Calu3 (cell line): ENCODE measurements at regions of chr5 and their contacts with region 1.

Region 1: GRCh38 chr5:141878711-141879425 is 658 bp upstream of the PCDH1 start:
- DNase-seq: peak; percentile 93
- H3K4me3 Mint-ChIP-seq: peak overlapping the region; percentile 87
- H3K27ac Mint-ChIP-seq: peak overlapping the region; percentile 49
- H3K4me1 Mint-ChIP-seq: peaks cover 32% of the 10 kb centered on the region
- H3K27me3 Mint-ChIP-seq: peaks cover 44% of the 10 kb centered on the region
- CTCF ChIP-seq: peak; percentile 95

Region 2: DNA sequence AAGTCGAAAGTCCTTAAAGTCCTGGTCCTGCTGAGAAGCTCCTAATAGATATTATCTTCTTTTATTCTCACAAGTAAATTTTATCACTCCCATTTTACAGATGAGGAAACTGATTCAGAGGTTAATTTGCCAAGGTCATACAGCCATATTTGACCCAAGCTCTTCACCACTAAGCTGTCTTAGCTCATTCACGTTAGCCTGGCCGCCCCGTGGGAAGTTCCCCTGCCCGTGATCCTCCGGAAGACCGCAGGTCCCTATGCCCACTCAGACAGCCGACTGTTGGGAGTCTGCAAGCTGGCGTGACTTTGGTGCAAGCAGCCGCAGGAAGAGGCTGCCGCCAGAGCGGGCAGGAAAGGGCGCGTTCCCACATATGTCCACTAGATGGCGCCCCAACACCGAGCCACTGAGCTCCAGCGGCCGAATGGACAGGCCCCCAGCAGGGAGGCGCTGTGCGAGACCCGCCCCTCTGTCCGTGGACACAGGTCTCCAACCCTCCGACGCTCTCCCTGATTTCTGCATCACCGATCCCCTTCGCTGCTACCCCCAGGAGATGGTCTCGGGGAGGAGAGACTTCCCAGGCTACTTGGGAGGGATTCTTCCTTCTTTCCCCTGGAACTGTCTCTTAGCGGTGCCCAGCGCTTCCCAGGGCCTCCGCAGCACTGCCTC is 186.9 kb before region 1 on chr5:
- CTCF ChIA-PET with region 1: interaction called, 35 read pairs
- intact Hi-C with region 1: loop called (anchors 2 kb)
- DNase-seq: peak; percentile 95
- H3K4me3 Mint-ChIP-seq: peak overlapping the region; percentile 69
- H3K27ac Mint-ChIP-seq: no peak overlapping the region
- H3K4me1 Mint-ChIP-seq: peaks cover 35% of the 10 kb centered on the region
- H3K27me3 Mint-ChIP-seq: peaks cover 47% of the 10 kb centered on the region
- CTCF ChIP-seq: peak; percentile 97

Region 3: DNA sequence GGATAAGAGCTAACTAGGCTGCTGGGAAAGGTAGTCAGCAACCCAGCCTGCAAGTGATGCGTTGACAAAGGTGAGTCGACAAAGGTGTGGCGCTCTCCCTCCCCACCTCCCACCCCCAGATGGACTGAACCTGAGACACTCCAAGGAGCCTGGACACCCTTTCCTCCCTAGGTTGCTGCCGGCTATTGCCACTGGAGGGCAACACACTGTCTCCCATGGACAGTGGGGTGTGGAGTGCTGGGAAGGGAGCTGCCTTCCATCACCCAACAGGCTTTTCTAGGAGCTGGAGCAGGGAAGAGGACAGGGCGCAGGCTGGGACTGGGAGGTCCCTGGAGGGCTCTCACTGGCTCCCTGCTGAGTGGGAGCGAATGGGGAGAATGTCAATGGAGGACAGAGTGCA is 121.5 kb before region 1 on chr5:
- CTCF ChIA-PET with region 1: interaction called, 76 read pairs
- intact Hi-C with region 1: loop called (anchors 1 kb)
- DNase-seq: peak; percentile 75
- H3K4me3 Mint-ChIP-seq: no peak overlapping the region
- H3K27ac Mint-ChIP-seq: peak overlapping the region; percentile 9
- H3K4me1 Mint-ChIP-seq: peaks cover 20% of the 10 kb centered on the region
- H3K27me3 Mint-ChIP-seq: peaks cover 61% of the 10 kb centered on the region
- CTCF ChIP-seq: peak; percentile 50

Region 4: DNA sequence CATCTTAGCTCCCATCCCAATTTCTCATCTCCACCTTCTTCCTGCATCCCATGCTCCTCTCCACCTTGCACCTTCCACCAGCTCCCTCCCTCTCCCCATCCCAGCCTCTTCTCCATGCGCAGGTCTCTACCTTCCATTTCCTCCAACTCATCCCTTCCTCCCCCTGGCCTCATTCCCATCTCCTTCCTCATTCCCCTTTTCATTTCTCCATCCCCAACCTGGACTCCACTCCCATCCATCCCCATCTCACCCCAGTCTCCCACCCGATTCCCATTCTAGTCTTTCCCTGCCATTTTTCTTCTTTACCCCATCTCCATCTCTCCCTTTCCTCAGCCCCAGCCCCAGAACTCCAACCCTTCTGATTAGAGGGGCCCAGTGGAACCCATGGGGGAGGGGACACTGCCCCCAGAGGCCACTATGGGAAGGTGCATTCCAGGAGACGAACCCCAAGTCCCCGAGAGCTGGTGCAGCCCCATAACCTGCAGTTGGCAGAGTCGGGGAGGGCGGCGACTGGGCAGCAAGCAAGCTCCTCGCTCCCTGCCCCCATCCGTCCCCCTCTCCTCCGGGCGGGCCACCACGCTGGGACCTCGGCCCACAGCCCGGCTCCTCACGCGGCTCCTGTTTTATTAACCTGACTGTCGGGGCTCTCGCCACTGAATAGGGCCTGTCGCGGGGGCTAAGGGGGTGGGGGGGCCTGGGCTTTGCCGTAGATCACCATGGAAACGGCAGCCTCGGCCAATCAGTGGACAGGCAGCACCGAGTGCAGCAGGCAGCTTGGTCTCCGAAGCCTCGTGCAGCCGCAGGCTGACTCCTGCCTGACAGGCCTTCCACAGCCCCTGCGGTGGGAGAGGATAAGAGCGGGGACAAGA is 67.3 kb before region 1 on chr5:
- CTCF ChIA-PET with region 1: interaction called, 15 read pairs
- intact Hi-C with region 1: loop called (anchors 5 kb)
- DNase-seq: peak; percentile 23
- H3K4me3 Mint-ChIP-seq: no peak overlapping the region
- H3K27ac Mint-ChIP-seq: no peak overlapping the region
- H3K4me1 Mint-ChIP-seq: no peaks in the 10 kb centered on the region
- H3K27me3 Mint-ChIP-seq: peaks cover 40% of the 10 kb centered on the region
- CTCF ChIP-seq: peak; percentile 70

Region 5: GRCh38 chr5:141849375-141850243 is 29.3 kb before region 1 on chr5:
- CTCF ChIA-PET with region 1: interaction called, 12 read pairs
- intact Hi-C with region 1: loop called (anchors 2 kb)
- DNase-seq: peak; percentile 99
- H3K4me3 Mint-ChIP-seq: peak overlapping the region; percentile 48
- H3K27ac Mint-ChIP-seq: peak overlapping the region; percentile 93
- H3K4me1 Mint-ChIP-seq: peaks cover 53% of the 10 kb centered on the region
- H3K27me3 Mint-ChIP-seq: no peaks in the 10 kb centered on the region
- CTCF ChIP-seq: no peak

Region 6: DNA sequence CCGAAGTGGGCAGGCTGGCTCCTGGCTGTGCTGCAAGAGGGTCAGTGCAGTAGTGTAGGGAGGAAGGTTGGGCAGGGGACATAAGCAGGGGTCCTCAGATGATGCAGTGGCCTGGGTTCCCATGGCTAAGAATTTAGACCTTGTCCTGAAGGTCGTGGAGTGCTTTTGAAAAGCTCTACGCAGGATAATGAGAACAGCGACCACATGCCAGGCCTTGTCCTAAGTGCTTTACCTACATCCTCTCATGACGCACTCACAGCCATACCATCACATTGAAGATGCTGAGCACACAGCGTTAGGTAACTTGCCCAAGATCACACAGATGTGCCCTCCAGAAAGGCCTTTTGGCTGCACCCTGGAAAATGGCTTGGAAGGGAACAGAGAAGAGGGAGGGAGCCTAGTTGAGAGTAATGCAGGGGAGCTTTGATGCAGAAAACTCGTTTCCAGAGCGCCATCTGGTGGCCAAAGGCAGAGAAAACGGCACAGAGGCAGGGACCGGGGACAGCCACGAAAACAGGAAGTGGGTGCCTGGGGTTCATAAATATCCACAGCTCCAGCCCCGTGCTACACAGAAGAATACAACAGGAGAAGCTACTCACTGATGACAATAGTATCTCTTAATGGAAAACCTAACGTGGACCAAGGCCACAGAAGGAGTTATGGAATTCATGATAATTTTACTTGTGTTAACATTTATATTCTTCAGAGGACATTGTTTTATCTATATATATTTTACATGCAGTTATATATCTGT is 81.8 kb after region 1 on chr5:
- CTCF ChIA-PET with region 1: interaction called, 17 read pairs
- intact Hi-C with region 1: no loop called
- DNase-seq: peak; percentile 91
- H3K4me3 Mint-ChIP-seq: no peak overlapping the region
- H3K27ac Mint-ChIP-seq: no peak overlapping the region
- H3K4me1 Mint-ChIP-seq: no peaks in the 10 kb centered on the region
- H3K27me3 Mint-ChIP-seq: peaks cover 14% of the 10 kb centered on the region
- CTCF ChIP-seq: peak; percentile 86

Region 7: DNA sequence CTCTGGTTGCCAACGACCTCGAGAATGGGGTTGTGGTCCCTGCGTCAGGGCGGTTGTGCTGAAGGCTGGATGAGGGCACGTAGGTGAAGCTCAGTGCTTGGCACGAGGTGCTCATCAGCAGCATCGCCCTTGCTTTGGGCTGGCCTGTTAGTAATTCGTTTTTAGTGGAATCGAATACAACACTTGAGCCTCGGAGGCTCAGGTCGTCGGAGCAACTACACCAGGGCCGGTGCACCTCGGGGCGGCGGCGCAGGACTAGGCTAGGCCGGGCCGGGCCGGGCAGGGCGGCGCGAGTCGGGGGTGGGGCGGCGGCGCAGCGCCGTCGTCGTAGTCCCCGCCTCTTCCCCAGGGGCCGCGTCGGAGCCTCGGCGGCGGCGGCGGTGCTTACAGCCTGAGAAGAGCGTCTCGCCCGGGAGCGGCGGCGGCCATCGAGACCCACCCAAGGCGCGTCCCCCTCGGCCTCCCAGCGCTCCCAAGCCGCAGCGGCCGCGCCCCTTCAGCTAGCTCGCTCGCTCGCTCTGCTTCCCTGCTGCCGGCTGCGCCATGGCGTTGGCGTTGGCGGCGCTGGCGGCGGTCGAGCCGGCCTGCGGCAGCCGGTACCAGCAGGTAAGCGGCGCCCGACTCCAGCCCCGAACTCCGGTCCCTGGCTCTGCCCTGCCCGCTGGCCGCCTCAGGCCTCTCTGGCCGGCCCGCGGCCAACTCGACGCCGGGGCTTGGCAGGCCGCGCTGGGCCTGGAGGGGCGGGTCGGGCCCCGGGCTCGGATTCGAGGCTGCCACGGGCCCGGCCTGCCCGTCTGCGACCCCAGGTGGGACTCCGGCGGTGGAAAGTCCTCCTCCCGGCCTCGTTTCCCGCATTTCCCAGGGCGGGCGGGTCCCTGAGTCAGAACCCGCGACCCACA is 229.8 kb after region 1 on chr5 and contains the start of gene NDFIP1:
- CTCF ChIA-PET with region 1: no interaction called
- intact Hi-C with region 1: no loop called
- DNase-seq: peak; percentile 94
- H3K4me3 Mint-ChIP-seq: peak within 1 kb of the TSS; percentile 95
- H3K27ac Mint-ChIP-seq: peak within 1 kb of the TSS; percentile 76
- H3K4me1 Mint-ChIP-seq: peaks cover 26% of the 10 kb centered on the region
- H3K27me3 Mint-ChIP-seq: no peaks in the 10 kb centered on the region
- CTCF ChIP-seq: no peak
- total RNA-seq, gene NDFIP1: 58.0 and 70.1 TPM in 2 replicates